WTC11 (cell line): ENCODE measurements at regions of chr10 and their contacts with region 1.

Region 1: DNA sequence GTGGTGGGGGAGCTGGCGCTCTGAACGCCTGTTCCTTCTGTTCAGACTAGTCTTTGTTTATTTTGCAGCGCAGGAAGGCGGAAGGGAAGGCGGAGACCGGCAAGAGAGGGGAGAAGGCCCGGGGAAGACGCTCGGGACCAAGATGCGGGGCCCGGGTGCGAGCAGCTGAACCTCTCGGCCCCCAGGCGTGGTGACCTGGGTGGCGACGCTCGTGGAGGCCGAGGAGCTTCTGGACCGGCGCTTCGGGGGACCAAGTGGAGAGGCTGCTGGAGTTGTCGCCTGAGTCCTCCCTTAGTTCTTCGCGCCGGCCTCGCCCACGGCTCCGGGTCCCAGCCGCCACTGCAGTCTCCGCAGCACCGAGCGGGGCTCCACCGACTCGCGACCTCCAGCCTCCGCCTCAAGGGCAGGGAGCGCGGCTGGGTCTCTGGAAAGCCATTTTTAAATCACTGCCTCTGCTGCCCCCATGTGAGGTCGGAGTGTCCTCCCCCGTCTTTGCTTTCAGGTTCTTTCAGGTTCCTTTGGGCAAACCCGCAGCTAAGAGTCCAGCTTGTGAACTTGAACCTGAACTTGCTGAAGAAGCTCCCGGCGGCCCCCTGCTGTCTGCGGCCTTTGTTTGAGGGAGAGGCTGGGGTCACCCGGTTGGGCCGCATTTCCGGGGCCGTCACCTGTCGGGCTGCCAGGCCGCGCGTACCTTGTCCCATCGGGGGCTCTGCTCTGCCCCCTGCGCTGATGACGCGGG is 135.9 kb downstream of the KIF20B start:
- DNase-seq: peak; percentile 55
- ATAC-seq: peak; percentile 64
- H3K4me3 Mint-ChIP-seq: peak overlapping the region; percentile 75
- H3K27ac Mint-ChIP-seq: no peak overlapping the region
- H3K4me1 Mint-ChIP-seq: peaks cover 9% of the 10 kb centered on the region; the same call in 1 of the 2 replicates
- H3K27me3 Mint-ChIP-seq: peaks cover 36% of the 10 kb centered on the region
- CTCF ChIP-seq: no peak

Region 2: DNA sequence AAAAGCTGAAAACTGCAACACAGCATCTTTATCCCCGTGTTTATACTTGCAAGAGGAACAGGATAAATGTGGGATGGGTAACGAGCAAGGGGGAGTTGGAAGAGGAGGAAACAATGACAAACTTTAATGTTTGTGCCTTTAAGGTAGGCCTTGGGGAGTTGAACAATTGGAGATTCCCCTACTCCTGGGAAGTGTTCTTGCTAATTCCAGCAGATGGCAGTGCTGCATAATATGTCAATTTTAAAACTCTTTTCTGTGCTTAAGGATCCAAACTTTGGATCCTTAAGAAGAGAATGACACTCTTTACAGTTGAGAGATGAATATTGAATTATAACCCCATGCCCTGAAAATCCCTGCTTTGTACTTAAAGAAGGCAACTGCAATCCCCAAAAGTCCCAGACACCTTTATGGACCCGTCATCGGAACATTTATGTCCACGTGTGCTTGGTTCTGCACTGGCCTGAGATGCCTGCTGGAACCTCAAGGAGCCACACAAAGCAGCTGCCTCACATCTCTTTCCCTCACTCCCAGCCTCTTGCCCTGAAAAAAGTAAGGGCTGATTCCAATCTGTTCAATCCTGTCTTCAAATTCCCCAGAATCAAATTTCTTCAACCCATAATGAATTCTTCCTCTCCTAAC is 411.0 kb before region 1 on chr10:
- CTCF ChIA-PET with region 1: no interaction called
- POLR2A ChIA-PET with region 1: no interaction called
- DNase-seq: no peak
- ATAC-seq: peak; percentile 91
- H3K4me3 Mint-ChIP-seq: no peak overlapping the region
- H3K27ac Mint-ChIP-seq: no peak overlapping the region
- H3K4me1 Mint-ChIP-seq: peaks cover 48% of the 10 kb centered on the region
- H3K27me3 Mint-ChIP-seq: no peaks in the 10 kb centered on the region
- CTCF ChIP-seq: peak; percentile 54; the same call in 1 of the 2 replicates

Region 3: GRCh38 chr10:89793649-89794254 is 43.6 kb before region 1 on chr10:
- CTCF ChIA-PET with region 1: no interaction called
- POLR2A ChIA-PET with region 1: no interaction called
- DNase-seq: no peak
- ATAC-seq: peak; percentile 79
- H3K4me3 Mint-ChIP-seq: no peak overlapping the region
- H3K27ac Mint-ChIP-seq: no peak overlapping the region
- H3K4me1 Mint-ChIP-seq: peaks cover 29% of the 10 kb centered on the region
- H3K27me3 Mint-ChIP-seq: no peaks in the 10 kb centered on the region; the same call in 1 of the 2 replicates
- CTCF ChIP-seq: peak; percentile 66

Region 4: DNA sequence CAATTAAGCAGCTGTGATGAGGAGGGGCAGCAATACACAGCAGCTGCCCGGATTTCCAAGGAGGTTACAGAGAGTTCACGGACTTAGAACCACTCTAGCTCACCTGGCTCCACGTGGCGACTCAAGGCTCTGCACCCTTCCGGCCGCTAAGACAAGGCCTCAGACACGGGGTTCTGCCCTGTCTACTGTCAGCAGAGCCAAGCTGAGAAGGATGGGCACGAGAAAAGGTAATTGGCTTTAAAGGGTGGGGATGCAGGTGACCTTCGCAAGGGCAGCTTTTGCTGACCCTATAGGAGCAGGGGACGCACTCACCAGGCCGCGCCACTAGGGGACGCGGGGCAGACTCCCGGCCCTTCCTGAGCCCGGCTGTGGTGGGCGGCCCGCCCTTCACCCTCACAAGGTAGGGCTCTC is 16.5 kb after region 1 on chr10:
- CTCF ChIA-PET with region 1: interaction called, 10 read pairs
- POLR2A ChIA-PET with region 1: no interaction called
- DNase-seq: peak; percentile 81
- ATAC-seq: peak; percentile 98
- H3K4me3 Mint-ChIP-seq: no peak overlapping the region
- H3K27ac Mint-ChIP-seq: no peak overlapping the region
- H3K4me1 Mint-ChIP-seq: peaks cover 15% of the 10 kb centered on the region
- H3K27me3 Mint-ChIP-seq: no peaks in the 10 kb centered on the region; the same call in 1 of the 2 replicates
- CTCF ChIP-seq: peak; percentile 59; the same call in 1 of the 2 replicates

Region 5: DNA sequence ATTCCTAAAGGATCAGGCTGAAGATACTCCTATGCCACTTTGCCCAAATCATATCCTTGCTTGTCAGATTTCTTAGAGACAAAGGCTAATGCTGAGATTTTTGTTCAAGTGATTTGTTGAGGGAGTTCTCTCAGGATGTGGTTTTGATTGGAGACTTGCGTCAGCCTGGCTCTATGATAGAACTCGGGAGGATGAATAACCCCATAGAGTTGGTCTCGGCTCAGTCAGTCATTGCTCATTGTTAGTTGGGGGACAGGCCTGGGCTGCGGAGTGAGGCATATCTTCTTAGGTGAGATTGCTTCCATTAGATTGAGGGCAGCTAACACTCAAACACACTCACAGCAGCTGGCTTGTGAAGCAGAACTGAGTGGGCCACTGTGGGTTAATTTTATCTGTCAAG is 67.4 kb after region 1 on chr10:
- CTCF ChIA-PET with region 1: no interaction called
- POLR2A ChIA-PET with region 1: no interaction called
- DNase-seq: no peak
- ATAC-seq: no peak
- H3K4me3 Mint-ChIP-seq: no peak overlapping the region
- H3K27ac Mint-ChIP-seq: no peak overlapping the region
- H3K4me1 Mint-ChIP-seq: peaks cover 7% of the 10 kb centered on the region; the same call in 1 of the 2 replicates
- H3K27me3 Mint-ChIP-seq: no peaks in the 10 kb centered on the region
- CTCF ChIP-seq: no peak

Region 6: GRCh38 chr10:89929282-89930026 is 92.1 kb after region 1 on chr10:
- CTCF ChIA-PET with region 1: no interaction called
- POLR2A ChIA-PET with region 1: no interaction called
- DNase-seq: no peak
- ATAC-seq: no peak
- H3K4me3 Mint-ChIP-seq: no peak overlapping the region
- H3K27ac Mint-ChIP-seq: no peak overlapping the region
- H3K4me1 Mint-ChIP-seq: no peaks in the 10 kb centered on the region
- H3K27me3 Mint-ChIP-seq: no peaks in the 10 kb centered on the region; the same call in 1 of the 2 replicates
- CTCF ChIP-seq: no peak